Dorsolateral prefrontal cortex (tissue), 120 donors: ENCODE measurements at regions of chr14 and their contacts with region 1.

Region 1: GRCh38 chr14:75293920-75294642 is 15.5 kb downstream of the FOS start:
- DNase-seq: peak; percentile 84 to 98 (median 92)
- H3K4me3 ChIP-seq: peak overlapping the region; percentile 57 to 94 (median 77)
- H3K27ac ChIP-seq: peak overlapping the region; percentile 57 to 99 (median 93)
- H3K27me3 ChIP-seq: no peaks in the 10 kb centered on the region
- CTCF ChIP-seq: peak in 16 of 56 donors; percentile 1 to 29 (median 16)

Region 2: GRCh38 chr14:75132382-75133086 is 161.5 kb before region 1 on chr14:
- intact Hi-C with region 1: loop called (anchors 2 kb)
- DNase-seq: peak in 2 of 10 donors; percentile 44 to 59
- H3K4me3 ChIP-seq: peak overlapping the region in 1 of 59 donors; percentile 1
- H3K27ac ChIP-seq: peak overlapping the region in 56 of 59 donors; percentile 3 to 86 (median 67)
- H3K27me3 ChIP-seq: no peaks in the 10 kb centered on the region
- CTCF ChIP-seq: peak; percentile 62 to 94 (median 86)

Region 3: GRCh38 chr14:75229661-75230139 is 64.4 kb before region 1 on chr14:
- intact Hi-C with region 1: no loop called
- DNase-seq: no peak
- H3K4me3 ChIP-seq: no peak overlapping the region
- H3K27ac ChIP-seq: peak overlapping the region in 18 of 59 donors; percentile 3 to 67 (median 21)
- H3K27me3 ChIP-seq: no peaks in the 10 kb centered on the region
- CTCF ChIP-seq: no peak

Region 4: GRCh38 chr14:75278422-75279161 is 15.5 kb before region 1 on chr14 and contains the start of gene FOS:
- intact Hi-C with region 1: loop called (anchors 1 to 2 kb)
- DNase-seq: peak; percentile 82 to 96 (median 94)
- H3K4me3 ChIP-seq: peak within 1 kb of the TSS; percentile 63 to 97 (median 85)
- H3K27ac ChIP-seq: peak within 1 kb of the TSS; percentile 77 to 100 (median 99)
- H3K27me3 ChIP-seq: no peaks in the 10 kb centered on the region
- CTCF ChIP-seq: peak in 4 of 56 donors; percentile 5 to 23 (median 16)
- total RNA-seq, gene FOS: 7.4 to 738 (median 68.8) TPM